IMR-90 (cell line): ENCODE measurements at regions of chr13 and their contacts with region 1.

Region 1: DNA sequence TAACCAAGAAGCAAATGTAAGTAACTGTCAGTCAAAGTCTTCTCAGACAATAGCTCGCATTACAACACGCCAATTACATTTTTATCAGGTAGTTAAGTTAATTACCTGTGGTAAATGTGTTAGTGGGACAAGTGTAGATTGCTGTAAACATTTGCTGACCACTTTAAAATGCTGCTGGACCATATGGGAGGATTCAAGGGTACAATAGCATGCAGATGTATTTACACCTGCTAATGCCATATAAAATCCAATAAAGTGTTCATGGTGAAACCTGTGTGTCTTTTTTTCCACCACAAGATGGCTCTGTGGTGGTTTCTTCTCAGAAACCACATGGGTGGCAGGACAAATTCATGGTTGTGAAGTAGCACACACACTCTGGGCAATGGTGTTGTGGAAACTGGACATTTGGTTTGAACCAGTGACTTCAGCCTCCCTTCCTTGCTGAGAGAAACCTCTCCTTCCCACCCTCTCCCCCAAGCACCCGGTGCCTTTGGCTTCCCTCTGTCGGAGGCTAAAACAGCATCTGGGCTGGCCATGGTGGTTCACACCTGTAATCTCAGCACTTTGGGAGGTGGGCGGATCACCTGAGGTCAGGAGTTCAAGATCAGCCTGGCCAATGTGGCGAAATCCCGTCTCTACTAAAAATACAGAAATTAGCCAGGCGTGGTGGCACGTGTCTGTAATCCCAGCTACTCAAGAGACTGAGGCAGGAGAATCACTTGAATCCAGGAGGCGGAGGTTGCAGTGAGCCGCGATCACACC is 18.1 kb upstream of the GTF3A start:
- DNase-seq: peak; percentile 49
- ATAC-seq: peak; percentile 38; the same call in 1 of the 2 replicates
- H3K4me3 ChIP-seq: no peak overlapping the region
- H3K27ac ChIP-seq: no peak overlapping the region
- H3K4me1 ChIP-seq: peaks cover 4% of the 10 kb centered on the region; the same call in 1 of the 2 replicates
- H3K27me3 ChIP-seq: peaks cover 23% of the 10 kb centered on the region
- CTCF ChIP-seq: peak; percentile 58
- POLR2A ChIP-seq: no peak
- RAD21 ChIP-seq: peak; percentile 41; the same call in 1 of the 2 replicates

Region 2: GRCh38 chr13:27424246-27425157 is 18.1 kb after region 1 on chr13 and contains the start of gene GTF3A:
- CTCF ChIA-PET with region 1: no interaction called
- POLR2A ChIA-PET with region 1: no interaction called
- dilution Hi-C with region 1: no loop called
- in situ Hi-C with region 1: no loop called
- intact Hi-C with region 1: loop called (anchors 1 kb)
- DNase-seq: peak; percentile 82
- ATAC-seq: peak; percentile 92
- H3K4me3 ChIP-seq: peak within 1 kb of the TSS; percentile 57
- H3K27ac ChIP-seq: peak within 1 kb of the TSS; percentile 81
- H3K4me1 ChIP-seq: peaks cover 15% of the 10 kb centered on the region
- H3K27me3 ChIP-seq: peaks cover 2% of the 10 kb centered on the region; the same call in 1 of the 2 replicates
- CTCF ChIP-seq: no peak
- POLR2A ChIP-seq: peak; percentile 51; the same call in 1 of the 2 replicates
- RAD21 ChIP-seq: no peak
- total RNA-seq, gene GTF3A: 116 and 148 TPM in 2 replicates